Activated CD4-positive, alpha-beta T cell treated with anti-CD3 and anti-CD28 coated beads for 36 hours (primary cell): ENCODE measurements at regions of chr6 and their contacts with region 1.

Region 1: GRCh38 chr6:89940225-89941027 is 46.2 kb downstream of the GJA10 start:
- DNase-seq: peak; percentile 80
- ATAC-seq: peak; percentile 80
- H3K4me3 Mint-ChIP-seq: no peak overlapping the region
- H3K27ac Mint-ChIP-seq: peak overlapping the region; percentile 47
- H3K4me1 Mint-ChIP-seq: peaks cover 60% of the 10 kb centered on the region
- H3K27me3 Mint-ChIP-seq: no peaks in the 10 kb centered on the region

Region 2: GRCh38 chr6:89925826-89926225 is 14.6 kb before region 1 on chr6:
- CTCF ChIA-PET with region 1: interaction called, 10 read pairs
- POLR2A ChIA-PET with region 1: no interaction called
- intact Hi-C with region 1: no loop called
- DNase-seq: no peak
- ATAC-seq: peak; percentile 28
- H3K4me3 Mint-ChIP-seq: no peak overlapping the region
- H3K27ac Mint-ChIP-seq: no peak overlapping the region
- H3K4me1 Mint-ChIP-seq: peaks cover 45% of the 10 kb centered on the region
- H3K27me3 Mint-ChIP-seq: no peaks in the 10 kb centered on the region

Region 3: DNA sequence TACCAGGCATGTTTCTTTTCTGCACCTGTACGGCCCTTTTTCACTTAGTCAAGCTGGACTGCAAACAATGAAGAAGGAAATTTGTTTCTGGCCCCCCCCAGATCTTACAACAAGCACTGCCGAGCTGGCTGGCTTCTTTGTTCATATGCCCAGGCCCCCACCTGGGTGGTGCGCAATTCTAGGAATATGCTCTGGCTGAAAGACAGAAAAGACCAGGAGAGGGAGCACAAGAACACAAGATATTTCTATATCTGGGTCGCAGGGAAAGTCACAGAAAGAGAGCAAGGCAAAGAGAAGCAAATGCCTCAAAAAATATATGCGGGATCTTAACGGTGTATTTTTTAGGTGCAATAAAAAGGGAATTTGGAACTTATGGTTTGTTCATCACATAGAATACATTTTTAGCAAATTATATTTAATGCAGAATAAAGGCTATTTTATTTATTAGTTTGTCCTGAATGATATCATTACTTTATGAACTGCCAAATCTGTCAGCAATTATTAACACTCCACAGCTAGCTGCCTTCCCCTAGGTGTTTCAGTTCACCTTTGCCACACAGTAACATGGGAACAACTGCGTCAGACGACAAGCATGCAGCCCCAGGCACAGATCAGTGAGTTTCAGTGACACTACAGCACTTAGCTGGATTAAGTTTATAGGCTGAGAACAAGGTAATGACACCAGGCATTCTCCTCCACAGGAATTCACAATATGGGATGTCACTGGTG is 30.3 kb after region 1 on chr6:
- CTCF ChIA-PET with region 1: interaction called, 10 read pairs
- POLR2A ChIA-PET with region 1: no interaction called
- intact Hi-C with region 1: no loop called
- DNase-seq: no peak
- ATAC-seq: no peak
- H3K4me3 Mint-ChIP-seq: no peak overlapping the region
- H3K27ac Mint-ChIP-seq: peak overlapping the region; percentile 79
- H3K4me1 Mint-ChIP-seq: peaks cover 54% of the 10 kb centered on the region
- H3K27me3 Mint-ChIP-seq: no peaks in the 10 kb centered on the region

Region 4: GRCh38 chr6:89984926-89985750 is 44.7 kb after region 1 on chr6:
- CTCF ChIA-PET with region 1: interaction called, 8 read pairs
- POLR2A ChIA-PET with region 1: no interaction called
- intact Hi-C with region 1: loop called in 1 of 2 experiments (anchors 5 kb)
- DNase-seq: no peak
- ATAC-seq: no peak
- H3K4me3 Mint-ChIP-seq: no peak overlapping the region
- H3K27ac Mint-ChIP-seq: peak overlapping the region; percentile 68
- H3K4me1 Mint-ChIP-seq: peaks cover 72% of the 10 kb centered on the region
- H3K27me3 Mint-ChIP-seq: no peaks in the 10 kb centered on the region

Region 5: GRCh38 chr6:90179190-90180169 is 239.1 kb after region 1 on chr6:
- CTCF ChIA-PET with region 1: interaction called, 21 read pairs
- POLR2A ChIA-PET with region 1: no interaction called
- intact Hi-C with region 1: loop called (anchors 5 kb)
- DNase-seq: peak; percentile 46
- ATAC-seq: no peak
- H3K4me3 Mint-ChIP-seq: no peak overlapping the region
- H3K27ac Mint-ChIP-seq: no peak overlapping the region
- H3K4me1 Mint-ChIP-seq: peaks cover 79% of the 10 kb centered on the region
- H3K27me3 Mint-ChIP-seq: no peaks in the 10 kb centered on the region

Region 6: GRCh38 chr6:90296346-90297114 is 356.1 kb after region 1 on chr6 and contains the start of gene BACH2:
- CTCF ChIA-PET with region 1: no interaction called
- POLR2A ChIA-PET with region 1: no interaction called
- intact Hi-C with region 1: loop called in 1 of 2 experiments (anchors 5 kb)
- DNase-seq: peak; percentile 99
- ATAC-seq: peak; percentile 66
- H3K4me3 Mint-ChIP-seq: peak within 1 kb of the TSS; percentile 86
- H3K27ac Mint-ChIP-seq: peak within 1 kb of the TSS; percentile 100
- H3K4me1 Mint-ChIP-seq: peaks cover 49% of the 10 kb centered on the region
- H3K27me3 Mint-ChIP-seq: peaks cover 7% of the 10 kb centered on the region
- total RNA-seq, gene BACH2: 74.7 to 87.3 TPM